Heart left ventricle (tissue), 16 donors: ENCODE measurements at regions of chr13 and their contacts with region 1.

Region 1: DNA sequence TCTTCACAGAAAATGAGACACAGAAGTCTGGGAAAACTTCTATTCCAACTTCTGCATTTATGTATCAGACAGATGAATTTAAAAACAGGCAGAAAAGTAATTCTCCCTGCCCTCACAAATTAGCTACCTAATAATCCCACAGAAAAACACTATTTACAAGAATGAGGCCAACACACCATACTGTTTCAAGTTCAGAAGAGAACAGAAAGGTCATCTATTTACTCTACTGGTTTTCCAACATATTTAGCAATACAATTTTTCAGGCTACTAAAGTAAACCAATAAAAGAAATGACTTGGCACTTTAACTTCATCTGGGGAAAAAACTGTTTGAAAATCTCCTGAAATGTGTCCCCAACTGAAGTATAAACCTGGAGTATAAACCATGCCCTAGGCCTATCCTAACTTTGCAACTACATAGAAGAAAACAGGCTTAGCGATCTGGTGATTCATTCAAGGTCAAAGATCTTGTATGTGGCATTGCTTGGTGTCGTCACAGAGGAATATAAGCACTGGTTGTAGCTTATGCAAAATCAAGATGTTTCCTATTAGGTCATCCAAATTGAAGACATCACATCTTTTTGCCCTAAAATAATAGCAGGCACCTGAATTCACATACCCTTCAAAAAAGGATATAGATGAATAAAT is 20.1 kb upstream of the EBPL start:
- DNase-seq: no peak
- ATAC-seq: peak in 1 of 4 donors; percentile 46
- H3K4me3 ChIP-seq: no peak overlapping the region
- H3K27ac ChIP-seq: no peak overlapping the region
- H3K4me1 ChIP-seq: no peaks in the 10 kb centered on the region
- H3K27me3 ChIP-seq: no peaks in the 10 kb centered on the region
- CTCF ChIP-seq: no peak
- POLR2A ChIP-seq: no peak

Region 2: DNA sequence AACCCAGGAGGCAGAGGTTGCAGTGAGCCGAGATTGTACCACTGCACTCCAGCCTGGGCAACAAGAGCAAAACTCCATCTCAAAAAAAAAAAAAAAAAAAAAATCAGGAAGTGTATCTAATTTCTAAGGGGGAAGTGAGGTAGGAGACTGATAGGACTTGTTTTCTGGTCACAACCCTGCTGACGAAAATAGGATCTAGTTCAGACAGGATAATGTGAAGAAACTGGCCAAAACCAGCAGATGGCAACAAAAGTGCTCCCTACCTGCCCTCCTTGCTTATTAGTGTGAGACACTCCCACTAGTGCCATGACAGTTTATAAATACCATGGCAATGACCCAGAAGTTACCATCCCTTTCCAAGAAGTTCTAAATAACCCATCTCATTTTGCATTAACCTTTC is 117.1 kb after region 1 on chr13:
- intact Hi-C with region 1: no loop called
- DNase-seq: no peak
- ATAC-seq: no peak
- H3K4me3 ChIP-seq: no peak overlapping the region
- H3K27ac ChIP-seq: no peak overlapping the region
- H3K4me1 ChIP-seq: no peaks in the 10 kb centered on the region
- H3K27me3 ChIP-seq: no peaks in the 10 kb centered on the region
- CTCF ChIP-seq: no peak
- POLR2A ChIP-seq: no peak

Region 3: GRCh38 chr13:50011461-50011860 is 300.1 kb after region 1 on chr13:
- intact Hi-C with region 1: loop called in 1 of 10 experiments (anchors 5 kb)
- DNase-seq: no peak
- ATAC-seq: no peak
- H3K4me3 ChIP-seq: no peak overlapping the region
- H3K27ac ChIP-seq: no peak overlapping the region
- H3K4me1 ChIP-seq: peaks cover 0 to 31% (median 15%) of the 10 kb centered on the region in 12 donors
- H3K27me3 ChIP-seq: no peaks in the 10 kb centered on the region
- CTCF ChIP-seq: no peak
- POLR2A ChIP-seq: no peak